Mammary epithelial cell (primary cell): ENCODE measurements at regions of chr14 and their contacts with region 1.

Region 1: DNA sequence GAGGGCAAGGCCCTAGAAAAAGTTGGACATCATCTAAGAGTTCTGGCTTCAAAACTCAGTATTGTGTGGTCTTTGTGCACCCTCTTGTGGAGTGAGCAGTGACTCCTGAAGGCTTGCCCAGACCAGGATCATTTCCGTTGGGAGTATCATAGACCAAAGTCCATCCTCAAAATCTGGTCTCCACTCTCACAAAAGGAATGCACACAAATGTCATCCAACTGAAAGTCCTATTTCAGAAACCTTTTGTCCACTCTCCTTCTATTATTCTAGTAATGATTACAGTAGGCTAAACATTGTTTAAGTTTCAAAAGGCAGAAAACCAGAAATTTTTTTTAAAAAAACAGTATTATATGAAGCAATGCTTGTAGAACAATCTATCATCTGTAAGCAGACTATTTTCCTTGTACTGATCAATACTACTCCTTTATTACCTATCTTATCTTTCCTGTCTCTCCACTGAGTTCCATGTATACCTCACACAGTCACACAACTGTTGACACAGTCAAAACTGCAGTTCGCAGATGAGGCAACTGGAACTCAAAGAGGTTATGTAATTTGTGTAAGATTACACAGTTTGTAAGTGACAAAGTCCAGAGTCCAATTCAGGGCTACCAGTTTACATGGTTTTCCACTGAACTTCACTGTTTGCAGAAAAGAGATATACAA is 41.4 kb downstream of the COX16 start:
- DNase-seq: peak; percentile 48
- H3K4me3 ChIP-seq: no peak overlapping the region
- H3K27ac ChIP-seq: no peak overlapping the region
- H3K4me1 ChIP-seq: peaks cover 9% of the 10 kb centered on the region
- H3K27me3 ChIP-seq: no peaks in the 10 kb centered on the region
- CTCF ChIP-seq: peak; percentile 42 to 65

Region 2: GRCh38 chr14:69580009-69580577 is 738.0 kb before region 1 on chr14:
- CTCF ChIA-PET with region 1: no interaction called
- dilution Hi-C with region 1: no loop called
- in situ Hi-C with region 1: no loop called
- intact Hi-C with region 1: loop called (anchors 10 kb)
- DNase-seq: peak; percentile 83
- H3K4me3 ChIP-seq: no peak overlapping the region
- H3K27ac ChIP-seq: no peak overlapping the region
- H3K4me1 ChIP-seq: no peaks in the 10 kb centered on the region
- H3K27me3 ChIP-seq: no peaks in the 10 kb centered on the region
- CTCF ChIP-seq: peak; percentile 24 to 47

Region 3: GRCh38 chr14:69850086-69850735 is 467.9 kb before region 1 on chr14:
- CTCF ChIA-PET with region 1: no interaction called
- dilution Hi-C with region 1: no loop called
- in situ Hi-C with region 1: loop called in 1 of 2 experiments (anchors 25 kb)
- intact Hi-C with region 1: no loop called
- DNase-seq: no peak
- H3K4me3 ChIP-seq: no peak overlapping the region
- H3K27ac ChIP-seq: no peak overlapping the region
- H3K4me1 ChIP-seq: no peaks in the 10 kb centered on the region
- H3K27me3 ChIP-seq: no peaks in the 10 kb centered on the region
- CTCF ChIP-seq: no peak

Region 4: GRCh38 chr14:70045844-70046535 is 272.1 kb before region 1 on chr14:
- CTCF ChIA-PET with region 1: no interaction called
- dilution Hi-C with region 1: no loop called
- in situ Hi-C with region 1: loop called in 1 of 2 experiments (anchors 25 kb)
- intact Hi-C with region 1: loop called (anchors 1 kb)
- DNase-seq: peak; percentile 50
- H3K4me3 ChIP-seq: no peak overlapping the region
- H3K27ac ChIP-seq: peak overlapping the region; percentile 9
- H3K4me1 ChIP-seq: peaks cover 12% of the 10 kb centered on the region
- H3K27me3 ChIP-seq: no peaks in the 10 kb centered on the region
- CTCF ChIP-seq: peak; percentile 85 to 96

Region 5: GRCh38 chr14:70086685-70087379 is 231.3 kb before region 1 on chr14:
- CTCF ChIA-PET with region 1: interaction called, 4 read pairs
- dilution Hi-C with region 1: no loop called
- in situ Hi-C with region 1: no loop called
- intact Hi-C with region 1: loop called (anchors 1 kb)
- DNase-seq: peak; percentile 13
- H3K4me3 ChIP-seq: no peak overlapping the region
- H3K27ac ChIP-seq: no peak overlapping the region
- H3K4me1 ChIP-seq: no peaks in the 10 kb centered on the region
- H3K27me3 ChIP-seq: peaks cover 3% of the 10 kb centered on the region
- CTCF ChIP-seq: peak; percentile 57 to 78

Region 6: DNA sequence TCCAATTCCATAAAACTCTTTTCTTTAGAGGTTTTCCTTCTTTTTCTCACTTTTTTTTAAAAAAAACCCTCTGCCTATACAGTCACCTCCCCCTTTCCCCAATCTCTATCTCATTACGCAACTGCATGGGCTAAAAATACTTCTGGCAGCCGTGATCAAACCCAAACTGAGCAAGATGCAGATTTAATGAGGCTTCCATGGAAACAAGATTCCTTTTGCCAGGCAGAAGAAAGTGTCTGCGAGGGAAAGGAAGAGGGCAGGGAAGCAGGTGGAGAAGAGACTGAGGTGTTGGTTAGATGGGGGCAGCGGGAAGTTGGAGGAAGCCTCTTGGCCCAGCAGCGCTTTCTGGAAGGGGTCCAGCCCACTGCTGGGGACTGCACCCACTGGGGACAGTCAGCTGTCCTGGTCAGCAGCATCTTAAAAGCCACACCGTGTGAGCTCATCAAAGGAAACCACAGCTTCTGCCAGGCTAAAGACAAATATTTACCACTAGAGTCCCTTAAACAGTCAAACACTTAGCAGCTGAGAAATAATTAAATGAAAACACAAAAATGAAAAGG is 219.8 kb before region 1 on chr14:
- CTCF ChIA-PET with region 1: no interaction called
- dilution Hi-C with region 1: no loop called
- in situ Hi-C with region 1: no loop called
- intact Hi-C with region 1: no loop called
- DNase-seq: no peak
- H3K4me3 ChIP-seq: no peak overlapping the region
- H3K27ac ChIP-seq: no peak overlapping the region
- H3K4me1 ChIP-seq: no peaks in the 10 kb centered on the region
- H3K27me3 ChIP-seq: peaks cover 6% of the 10 kb centered on the region
- CTCF ChIP-seq: no peak